IMR-90 (cell line): ENCODE measurements at regions of chr5 and their contacts with region 1.

Region 1: DNA sequence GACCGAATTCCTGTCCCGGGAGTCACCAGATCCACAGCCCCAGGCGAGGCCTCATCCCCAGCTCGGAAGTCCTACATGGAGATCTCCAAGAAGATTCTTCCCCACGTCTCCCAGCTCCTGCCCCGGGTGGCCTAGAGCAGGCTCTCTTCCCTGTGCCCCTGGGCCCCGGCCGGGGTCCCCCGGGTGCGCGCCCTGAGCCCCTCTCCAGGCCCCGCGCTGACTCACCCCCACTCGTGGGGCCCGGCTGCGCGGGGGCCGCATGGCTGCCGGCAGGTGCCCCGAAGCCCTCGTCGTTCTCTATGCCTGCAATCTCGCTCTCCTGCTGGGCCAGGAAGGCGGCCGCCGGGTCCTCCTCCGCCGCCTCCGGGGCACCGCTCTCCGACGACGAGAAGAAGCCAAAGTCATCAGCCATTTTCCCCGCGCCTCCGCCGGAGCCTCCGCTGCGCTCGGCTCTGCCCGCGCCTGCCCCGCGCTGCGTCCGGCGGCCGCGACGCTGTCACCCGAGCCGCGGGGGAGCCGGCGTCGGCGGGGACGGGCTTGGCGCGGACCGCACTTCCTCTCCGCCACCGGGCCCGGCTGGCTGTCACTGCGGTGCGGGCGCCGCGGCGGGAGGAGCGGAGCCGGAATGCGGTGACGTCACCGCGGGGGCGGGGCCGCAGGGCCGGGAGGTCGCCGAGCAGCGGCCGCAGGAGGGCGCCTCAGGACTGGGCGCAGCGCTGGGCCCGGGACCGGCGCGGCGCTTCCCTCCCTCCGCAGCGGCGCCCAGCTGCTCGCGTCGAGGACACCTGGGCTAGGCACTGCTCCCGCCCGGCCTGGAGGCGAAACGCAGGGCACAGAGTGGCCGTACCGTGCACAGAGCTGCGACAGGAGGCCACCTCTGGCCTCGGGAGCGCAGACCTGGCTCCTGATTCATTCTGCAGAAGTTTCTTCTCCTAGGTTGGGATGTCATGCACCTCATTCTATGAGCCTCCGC is at the start of gene CLTB:
- DNase-seq: peak; percentile 78
- ATAC-seq: peak; percentile 92
- H3K4me3 ChIP-seq: peak within 1 kb of the TSS; percentile 73
- H3K27ac ChIP-seq: peak within 1 kb of the TSS; percentile 54
- H3K4me1 ChIP-seq: peaks cover 11% of the 10 kb centered on the region
- H3K27me3 ChIP-seq: peaks cover 3% of the 10 kb centered on the region; the same call in 1 of the 2 replicates
- CTCF ChIP-seq: peak; percentile 99
- POLR2A ChIP-seq: peak; percentile 72
- RAD21 ChIP-seq: peak; percentile 96
- total RNA-seq, gene CLTB: 87.6 and 122 TPM in 2 replicates

Region 2: GRCh38 chr5:175494280-175495183 is 921.7 kb before region 1 on chr5:
- CTCF ChIA-PET with region 1: no interaction called
- POLR2A ChIA-PET with region 1: no interaction called
- dilution Hi-C with region 1: no loop called
- in situ Hi-C with region 1: no loop called
- intact Hi-C with region 1: no loop called
- DNase-seq: no peak
- ATAC-seq: no peak
- H3K4me3 ChIP-seq: no peak overlapping the region
- H3K27ac ChIP-seq: no peak overlapping the region
- H3K4me1 ChIP-seq: no peaks in the 10 kb centered on the region; the same call in 1 of the 2 replicates
- H3K27me3 ChIP-seq: no peaks in the 10 kb centered on the region
- CTCF ChIP-seq: no peak
- POLR2A ChIP-seq: no peak
- RAD21 ChIP-seq: no peak

Region 3: DNA sequence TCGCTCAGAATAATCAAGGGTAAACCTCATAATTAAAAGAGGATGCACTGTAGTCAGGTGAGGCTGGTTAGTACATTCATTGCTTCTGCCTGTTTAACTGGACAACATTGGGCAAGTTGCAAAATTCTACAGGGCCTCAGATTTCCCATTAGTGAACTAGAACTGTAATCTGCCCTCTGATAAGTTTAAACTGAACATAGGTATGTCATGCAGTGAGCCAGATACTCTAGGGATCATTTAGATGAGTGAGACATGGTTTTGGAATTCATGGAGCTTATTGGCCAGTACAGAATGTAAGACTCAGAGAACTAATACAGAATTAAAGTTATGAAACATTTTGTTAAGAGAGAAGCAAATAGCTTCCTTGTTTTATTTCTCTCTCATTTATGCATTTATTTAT is 85.1 kb after region 1 on chr5:
- CTCF ChIA-PET with region 1: interaction called, 3 read pairs
- POLR2A ChIA-PET with region 1: no interaction called
- dilution Hi-C with region 1: no loop called
- in situ Hi-C with region 1: no loop called
- intact Hi-C with region 1: loop called (anchors 2 kb)
- DNase-seq: peak; percentile 92
- ATAC-seq: peak; percentile 98
- H3K4me3 ChIP-seq: no peak overlapping the region
- H3K27ac ChIP-seq: peak overlapping the region; percentile 48; the same call in 1 of the 2 replicates
- H3K4me1 ChIP-seq: peaks cover 11% of the 10 kb centered on the region; the same call in 1 of the 2 replicates
- H3K27me3 ChIP-seq: no peaks in the 10 kb centered on the region
- CTCF ChIP-seq: no peak
- POLR2A ChIP-seq: no peak
- RAD21 ChIP-seq: no peak

Region 4: DNA sequence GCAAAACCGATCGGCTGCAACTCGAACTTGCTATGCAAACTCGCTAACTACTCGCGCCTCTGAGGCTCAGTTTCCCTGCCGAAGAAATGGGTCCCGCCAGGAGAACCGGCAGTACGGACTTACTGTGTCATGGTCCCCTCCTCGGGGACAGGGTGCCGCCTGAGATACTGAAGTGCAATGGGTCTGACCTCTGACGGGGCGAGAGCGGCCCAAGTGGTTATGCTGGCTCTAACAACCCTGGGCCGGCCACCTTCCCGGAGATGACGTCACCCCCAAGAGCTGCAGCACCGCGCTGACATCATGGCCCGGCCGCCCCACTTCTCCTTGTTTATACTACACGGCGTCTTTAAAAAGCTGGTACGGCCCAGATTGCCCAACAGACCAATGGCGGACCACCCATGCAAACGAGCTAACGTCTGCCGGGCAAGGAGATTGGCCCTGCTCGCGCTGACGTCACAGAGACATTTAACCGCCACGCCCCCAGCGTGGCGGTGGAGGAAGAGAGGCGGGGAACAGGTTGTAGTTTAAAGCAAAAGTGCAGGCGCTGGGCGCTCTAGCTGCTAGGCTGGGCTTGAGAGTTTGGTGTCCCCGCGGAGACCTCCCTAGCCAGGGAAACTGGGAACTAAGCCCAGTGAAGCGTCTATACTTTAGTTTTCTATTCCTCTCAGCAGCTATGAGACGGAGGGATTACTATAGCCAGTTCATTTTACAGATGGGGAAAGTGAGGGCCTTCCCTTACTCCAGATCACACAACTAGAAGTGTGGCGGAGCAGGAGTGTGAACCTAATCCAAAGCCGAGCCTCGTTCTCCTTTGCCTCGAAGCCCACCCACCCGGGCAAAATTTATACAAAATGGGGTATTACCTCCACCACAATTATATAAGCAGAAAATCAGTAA is 121.6 kb after region 1 on chr5:
- CTCF ChIA-PET with region 1: interaction called, 3 read pairs
- POLR2A ChIA-PET with region 1: no interaction called
- dilution Hi-C with region 1: no loop called
- in situ Hi-C with region 1: no loop called
- intact Hi-C with region 1: loop called (anchors 2 kb)
- DNase-seq: peak; percentile 100
- ATAC-seq: peak; percentile 79
- H3K4me3 ChIP-seq: peak overlapping the region; percentile 66
- H3K27ac ChIP-seq: peak overlapping the region; percentile 78
- H3K4me1 ChIP-seq: peaks cover 27% of the 10 kb centered on the region
- H3K27me3 ChIP-seq: no peaks in the 10 kb centered on the region
- CTCF ChIP-seq: 0 out of 2 replicates have a peak, but pooled peaks have one; percentile 3
- POLR2A ChIP-seq: no peak; the same call in 1 of the 2 replicates
- RAD21 ChIP-seq: no peak

Region 5: DNA sequence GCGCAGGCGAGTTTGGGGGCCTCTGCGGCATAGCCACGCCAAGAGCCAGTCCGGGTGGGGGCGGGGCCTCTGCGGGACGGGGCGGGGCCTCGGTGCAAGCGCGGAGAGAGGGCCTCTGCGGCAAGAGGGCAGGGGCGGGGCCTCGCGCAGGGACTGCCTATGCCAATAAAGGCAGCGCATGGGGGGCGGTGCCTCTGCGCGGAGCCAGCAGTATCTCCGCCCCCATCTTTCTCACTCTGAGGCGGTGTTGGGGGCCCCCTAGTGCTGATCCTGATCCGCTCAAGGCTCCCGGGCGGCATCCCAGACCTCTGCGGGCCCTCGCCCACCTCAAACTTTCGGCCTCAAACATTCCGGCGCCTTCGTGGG is 202.9 kb after region 1 on chr5:
- CTCF ChIA-PET with region 1: interaction called, 4 read pairs
- POLR2A ChIA-PET with region 1: no interaction called
- dilution Hi-C with region 1: no loop called
- in situ Hi-C with region 1: no loop called
- intact Hi-C with region 1: loop called (anchors 5 kb)
- DNase-seq: peak; percentile 86
- ATAC-seq: peak; percentile 95
- H3K4me3 ChIP-seq: no peak overlapping the region
- H3K27ac ChIP-seq: no peak overlapping the region
- H3K4me1 ChIP-seq: peaks cover 27% of the 10 kb centered on the region
- H3K27me3 ChIP-seq: peaks cover 32% of the 10 kb centered on the region
- CTCF ChIP-seq: peak; percentile 72
- POLR2A ChIP-seq: no peak
- RAD21 ChIP-seq: peak; percentile 80

Region 6: GRCh38 chr5:176647030-176647866 is 231.0 kb after region 1 on chr5 and contains the start of gene TSPAN17:
- CTCF ChIA-PET with region 1: no interaction called
- POLR2A ChIA-PET with region 1: no interaction called
- dilution Hi-C with region 1: no loop called
- in situ Hi-C with region 1: no loop called
- intact Hi-C with region 1: loop called (anchors 10 kb)
- DNase-seq: peak; percentile 98
- ATAC-seq: peak; percentile 99
- H3K4me3 ChIP-seq: peak within 1 kb of the TSS; percentile 76
- H3K27ac ChIP-seq: peak within 1 kb of the TSS; percentile 51
- H3K4me1 ChIP-seq: peaks cover 10% of the 10 kb centered on the region; the same call in 1 of the 2 replicates
- H3K27me3 ChIP-seq: no peaks in the 10 kb centered on the region; the same call in 1 of the 2 replicates
- CTCF ChIP-seq: peak; percentile 64
- POLR2A ChIP-seq: peak; percentile 86
- RAD21 ChIP-seq: peak; percentile 70
- total RNA-seq, gene TSPAN17: 34.2 and 35.3 TPM in 2 replicates